Lower leg skin (tissue), 4 donors: ENCODE measurements at regions of chr1 and their contacts with region 1.

Region 1: GRCh38 chr1:3453203-3453761 is 1.2 kb upstream of the ARHGEF16 start:
- DNase-seq: peak; percentile 59 to 96
- H3K4me3 ChIP-seq: no peak overlapping the region
- CTCF ChIP-seq: peak in 2 of 3 donors; percentile 59 to 77
- POLR2A ChIP-seq: no peak

Region 2: DNA sequence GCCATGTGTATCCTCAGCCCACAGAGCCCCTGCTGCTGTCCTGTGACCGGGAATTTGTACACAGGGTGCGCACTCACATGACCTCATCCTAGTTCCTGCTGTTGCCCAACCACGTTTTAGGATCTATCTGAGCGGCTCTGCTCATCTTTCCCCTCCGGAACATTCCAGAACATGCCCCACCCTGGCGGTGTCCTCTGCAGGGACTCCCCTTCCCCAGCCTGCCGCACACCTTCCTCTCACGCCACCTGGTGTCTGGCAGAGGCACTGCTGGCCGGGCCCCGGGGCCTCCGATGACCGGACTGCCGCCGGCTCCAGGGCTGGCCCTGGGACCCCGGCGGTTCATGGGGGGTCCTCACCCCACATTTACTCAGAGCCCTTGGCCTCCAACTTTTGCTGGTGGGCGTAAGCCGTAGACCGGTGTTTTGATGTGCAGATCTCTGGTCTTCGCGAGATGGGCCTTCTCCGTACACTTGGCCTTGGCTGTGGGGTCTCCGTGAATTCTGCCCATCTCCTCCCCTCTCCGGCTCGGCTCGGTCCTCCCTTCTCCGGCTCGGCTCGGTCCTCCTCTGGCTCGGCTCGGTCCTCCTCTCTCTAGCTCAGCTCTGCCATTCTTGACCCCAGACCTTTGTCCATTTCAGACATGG is 30.6 kb after region 1 on chr1:
- intact Hi-C with region 1: loop called (anchors 2 kb)
- DNase-seq: no peak
- H3K4me3 ChIP-seq: no peak overlapping the region
- CTCF ChIP-seq: peak in 1 of 3 donors; percentile 33
- POLR2A ChIP-seq: no peak

Region 3: GRCh38 chr1:3618881-3619671 is 165.8 kb after region 1 on chr1:
- intact Hi-C with region 1: loop called (anchors 5 kb)
- DNase-seq: peak; percentile 81 to 93
- H3K4me3 ChIP-seq: no peak overlapping the region
- CTCF ChIP-seq: peak in 1 of 3 donors; percentile 86
- POLR2A ChIP-seq: no peak